GM12878 (cell line): ENCODE measurements at regions of chr12 and their contacts with region 1.

Region 1: GRCh38 chr12:7970475-7971252 is 34.7 kb upstream of the SLC2A3 start:
- DNase-seq: peak; percentile 73
- ATAC-seq: peak; percentile 98
- H3K4me3 ChIP-seq: peak overlapping the region; percentile 92
- H3K27ac ChIP-seq: peak overlapping the region; percentile 75
- H3K4me1 ChIP-seq: peaks cover 12% of the 10 kb centered on the region
- H3K27me3 ChIP-seq: no peaks in the 10 kb centered on the region
- CTCF ChIP-seq: no peak
- EP300 ChIP-seq: peak in 1 of 2 experiments; percentile 25; a peak in 2 of 4 replicates
- POLR2A ChIP-seq: peak; percentile 67
- RAD21 ChIP-seq: no peak

Region 2: DNA sequence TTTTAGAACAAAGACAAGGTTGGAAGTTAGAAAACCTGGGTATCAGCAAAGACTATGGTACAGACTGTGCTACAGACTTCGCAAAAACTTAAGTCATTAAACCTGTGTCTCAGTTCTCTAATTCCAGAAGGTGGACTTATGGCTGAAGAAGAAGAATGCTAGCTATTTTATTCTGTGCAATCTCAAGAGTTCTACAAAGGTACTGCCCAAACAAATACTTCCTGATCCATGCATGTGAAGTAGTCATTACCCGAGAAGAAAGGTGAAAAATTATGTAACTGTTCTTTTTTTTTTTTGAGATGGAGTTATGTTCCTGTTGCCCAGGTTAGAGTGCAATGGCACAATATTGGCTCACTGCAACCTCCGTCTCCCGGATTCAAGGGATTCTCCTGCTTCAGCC is 10.8 kb after region 1 on chr12:
- CTCF ChIA-PET with region 1: no interaction called
- POLR2A ChIA-PET with region 1: interaction called, 11 read pairs
- RAD21 ChIA-PET with region 1: interaction called, 3 read pairs
- SMC1A ChIA-PET with region 1: interaction called, 6 read pairs
- in situ Hi-C with region 1: no loop called
- intact Hi-C with region 1: no loop called
- DNase-seq: no peak
- ATAC-seq: no peak
- H3K4me3 ChIP-seq: no peak overlapping the region
- H3K27ac ChIP-seq: no peak overlapping the region
- H3K4me1 ChIP-seq: no peaks in the 10 kb centered on the region; the same call in 1 of the 2 replicates
- H3K27me3 ChIP-seq: no peaks in the 10 kb centered on the region
- CTCF ChIP-seq: no peak
- EP300 ChIP-seq: no peak
- POLR2A ChIP-seq: no peak
- RAD21 ChIP-seq: no peak